ENCODE measurements at regions of chr18 and their contacts with region 1.

Region 1: DNA sequence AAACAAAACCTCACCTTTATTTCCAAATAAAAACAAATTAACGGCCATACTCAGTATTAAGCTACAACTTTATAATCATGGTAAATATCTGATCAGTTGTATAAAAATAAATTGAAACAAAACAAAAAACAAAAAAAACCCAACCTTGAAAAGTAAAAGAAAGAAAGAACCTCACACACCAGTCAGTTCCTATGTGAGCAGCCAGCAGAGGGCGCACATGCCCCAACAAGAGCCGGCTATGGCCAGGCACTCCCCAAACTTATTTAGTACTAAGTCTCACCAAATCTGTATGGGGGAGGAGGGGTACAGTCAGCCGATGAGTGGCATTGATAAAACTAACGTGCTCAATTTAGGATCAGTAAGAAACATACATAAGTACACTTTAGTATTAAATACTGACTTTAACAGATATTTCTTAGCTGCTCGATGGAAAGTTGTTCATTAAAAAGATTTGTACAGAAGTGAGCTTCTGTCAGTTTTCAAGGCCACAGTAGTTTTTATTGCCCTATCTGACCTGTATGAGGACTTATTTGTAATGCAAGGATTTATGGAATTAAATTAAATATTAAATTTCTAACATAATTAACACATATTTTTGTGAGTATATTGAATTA is 172.6 kb downstream of the TCF4 start:
- DNase-seq: peak; percentile 92
- H3K4me3 Mint-ChIP-seq: no peak overlapping the region
- H3K27ac Mint-ChIP-seq: no peak overlapping the region
- H3K4me1 Mint-ChIP-seq: no peaks in the 10 kb centered on the region
- H3K27me3 Mint-ChIP-seq: peaks cover 2% of the 10 kb centered on the region

Region 2: DNA sequence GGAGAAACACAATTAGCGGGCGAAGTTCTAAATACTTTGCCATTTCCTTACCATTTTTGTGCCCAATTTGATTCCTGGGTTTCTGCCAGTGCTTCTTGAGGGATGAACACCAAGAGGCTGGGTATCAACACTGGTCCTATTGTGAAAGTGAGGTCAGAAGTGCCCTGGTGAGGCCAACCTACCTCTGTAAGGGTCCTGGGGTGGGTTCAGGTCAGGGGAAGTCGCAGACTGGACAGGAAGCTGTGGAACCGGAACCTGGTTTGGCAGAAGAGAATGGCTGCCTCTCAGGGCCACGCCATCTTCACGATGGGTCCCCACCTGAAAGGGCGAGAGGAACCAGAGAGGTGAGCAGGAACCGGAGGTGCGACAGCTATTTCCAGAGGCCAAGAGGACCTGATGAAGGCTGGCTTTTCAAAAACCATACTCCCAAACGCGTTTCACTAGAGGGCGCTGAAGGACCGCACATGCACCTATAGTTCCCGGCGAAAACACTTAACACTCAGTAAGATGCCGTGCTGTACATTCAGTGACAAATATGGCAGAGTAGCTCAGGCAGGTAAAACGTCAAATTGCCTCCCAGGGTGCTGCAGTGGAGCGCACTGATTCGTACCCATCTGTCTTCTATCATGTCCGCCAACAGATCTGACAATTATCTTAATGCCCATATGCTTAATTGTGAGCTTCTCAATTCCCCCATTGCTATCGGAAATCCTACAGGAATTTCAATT is 180.8 kb before region 1 on chr18:
- intact Hi-C with region 1: loop called (anchors 10 kb)
- DNase-seq: peak; percentile 87
- H3K4me3 Mint-ChIP-seq: no peak overlapping the region
- H3K27ac Mint-ChIP-seq: no peak overlapping the region
- H3K4me1 Mint-ChIP-seq: peaks cover 2% of the 10 kb centered on the region
- H3K27me3 Mint-ChIP-seq: no peaks in the 10 kb centered on the region

Region 3: DNA sequence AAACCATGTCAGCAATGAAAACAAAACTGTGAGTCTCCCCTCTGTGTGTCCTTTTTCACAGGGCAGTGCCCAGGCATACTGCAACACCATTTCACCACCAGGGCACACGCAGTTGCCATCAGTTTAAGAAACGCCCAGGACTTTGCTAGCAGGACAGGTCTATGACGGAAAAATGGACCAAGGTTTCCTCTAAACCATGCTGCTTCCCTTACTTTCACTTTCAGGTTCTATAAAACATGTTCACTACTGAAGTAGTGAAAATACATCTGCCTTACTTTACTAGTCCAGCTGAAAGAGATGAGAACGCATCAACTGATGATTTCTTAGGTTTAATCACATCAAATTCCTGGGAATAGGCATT is 62.1 kb after region 1 on chr18:
- intact Hi-C with region 1: no loop called
- DNase-seq: peak; percentile 80
- H3K4me3 Mint-ChIP-seq: peak overlapping the region; percentile 81
- H3K27ac Mint-ChIP-seq: peak overlapping the region; percentile 67
- H3K4me1 Mint-ChIP-seq: peaks cover 9% of the 10 kb centered on the region
- H3K27me3 Mint-ChIP-seq: peaks cover 4% of the 10 kb centered on the region

Region 4: DNA sequence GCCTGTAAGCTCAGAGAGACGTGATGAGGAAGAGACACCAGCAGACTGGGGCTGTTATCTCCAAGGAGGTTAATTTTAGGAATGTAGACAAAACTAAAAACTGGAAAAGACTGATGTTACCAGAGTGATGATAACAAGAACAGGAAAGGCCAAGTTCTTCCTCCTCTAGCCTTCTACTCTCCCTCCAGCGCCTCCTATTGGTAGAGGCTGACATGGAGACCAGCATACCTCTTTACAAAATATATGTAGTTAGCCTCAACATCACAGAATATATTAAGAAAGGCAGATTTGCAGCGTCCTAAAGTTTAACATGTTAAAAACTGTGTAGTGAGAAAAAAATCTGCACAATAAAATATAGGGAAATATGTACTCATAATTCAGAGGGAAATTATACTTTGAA is 106.6 kb after region 1 on chr18:
- intact Hi-C with region 1: loop called (anchors 10 kb)
- DNase-seq: peak; percentile 69
- H3K4me3 Mint-ChIP-seq: no peak overlapping the region
- H3K27ac Mint-ChIP-seq: no peak overlapping the region
- H3K4me1 Mint-ChIP-seq: no peaks in the 10 kb centered on the region
- H3K27me3 Mint-ChIP-seq: no peaks in the 10 kb centered on the region

Region 5: DNA sequence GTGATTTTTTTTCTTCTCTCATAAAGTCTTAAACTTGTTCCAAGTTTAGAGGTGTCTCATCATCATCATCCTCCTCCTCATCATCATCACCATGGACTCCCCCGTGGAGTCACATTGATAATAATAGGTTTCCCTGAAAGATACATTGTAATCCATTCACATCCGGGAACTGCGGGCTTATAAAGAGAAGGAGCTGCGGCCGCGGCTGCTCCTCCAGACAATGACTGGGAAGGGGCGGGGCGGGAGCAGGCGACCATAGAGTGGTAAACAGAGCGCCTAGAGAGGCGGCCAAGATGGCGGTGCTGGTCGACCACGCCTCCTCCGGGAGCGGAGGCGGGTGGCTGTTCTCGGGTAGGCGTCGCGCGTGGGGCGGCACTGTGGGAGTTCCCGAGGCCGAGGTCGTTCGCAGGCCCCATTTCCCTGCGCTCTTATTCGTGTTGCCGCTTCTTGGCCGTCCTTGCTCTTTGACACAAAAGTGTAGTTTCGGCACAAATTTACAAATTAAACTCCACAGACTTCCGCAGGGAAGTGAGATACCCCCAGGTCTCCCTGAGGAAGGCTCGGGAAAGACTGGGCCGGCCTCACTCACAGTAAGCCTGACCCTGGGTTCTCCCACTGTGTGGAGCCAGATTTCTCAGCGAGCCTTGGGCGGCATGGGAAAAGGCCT is 174.4 kb after region 1 on chr18:
- intact Hi-C with region 1: loop called (anchors 5 kb)
- DNase-seq: peak; percentile 96
- H3K4me3 Mint-ChIP-seq: peak overlapping the region; percentile 86
- H3K27ac Mint-ChIP-seq: peak overlapping the region; percentile 83
- H3K4me1 Mint-ChIP-seq: peaks cover 21% of the 10 kb centered on the region
- H3K27me3 Mint-ChIP-seq: peaks cover 30% of the 10 kb centered on the region

Region 6: DNA sequence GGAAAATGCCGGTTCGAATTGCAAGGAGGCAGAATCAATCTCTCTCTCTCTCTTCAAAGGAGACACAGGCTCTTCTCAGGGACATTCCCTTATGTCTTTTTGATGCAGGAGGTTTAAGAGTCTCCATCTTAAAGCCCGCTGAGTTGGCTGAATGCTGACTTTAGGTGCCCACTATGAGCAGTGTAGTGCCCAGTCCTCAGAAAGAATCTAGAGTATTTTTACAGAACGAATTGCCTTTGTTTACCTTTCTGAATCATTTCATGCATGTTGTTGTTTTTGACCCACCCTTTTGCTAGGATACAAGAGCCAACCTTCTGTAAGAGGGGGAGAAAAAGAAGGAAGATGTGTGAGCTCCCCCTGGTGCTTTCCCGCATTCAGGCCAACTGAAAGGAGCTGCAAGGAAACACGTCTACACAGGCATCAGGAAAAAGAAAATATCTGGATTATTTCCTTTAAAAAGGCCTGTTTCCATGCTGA is 366.2 kb after region 1 on chr18:
- intact Hi-C with region 1: loop called (anchors 10 kb)
- DNase-seq: no peak
- H3K4me3 Mint-ChIP-seq: no peak overlapping the region
- H3K27ac Mint-ChIP-seq: no peak overlapping the region
- H3K4me1 Mint-ChIP-seq: peaks cover 6% of the 10 kb centered on the region
- H3K27me3 Mint-ChIP-seq: peaks cover 48% of the 10 kb centered on the region

Region 7: DNA sequence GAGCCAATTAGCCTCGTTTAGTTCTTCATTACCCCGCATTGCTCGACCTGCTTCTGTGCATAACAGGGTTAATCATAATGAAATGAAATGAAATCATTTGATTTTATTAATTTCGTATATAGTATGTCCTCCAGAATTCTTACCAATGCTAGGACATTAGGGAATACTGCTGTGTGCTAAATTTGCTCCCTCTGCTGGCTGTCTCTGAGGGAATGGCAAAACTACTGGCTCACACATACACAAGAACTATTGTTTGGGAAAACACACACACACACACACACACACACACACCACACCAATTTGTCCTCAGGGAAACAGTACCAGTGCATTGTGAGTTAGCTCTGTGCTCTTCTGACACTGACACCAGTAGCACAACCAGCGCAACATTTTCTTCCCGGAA is 445.9 kb after region 1 on chr18:
- intact Hi-C with region 1: no loop called
- DNase-seq: no peak
- H3K4me3 Mint-ChIP-seq: no peak overlapping the region
- H3K27ac Mint-ChIP-seq: no peak overlapping the region
- H3K4me1 Mint-ChIP-seq: no peaks in the 10 kb centered on the region
- H3K27me3 Mint-ChIP-seq: no peaks in the 10 kb centered on the region

Region 8: DNA sequence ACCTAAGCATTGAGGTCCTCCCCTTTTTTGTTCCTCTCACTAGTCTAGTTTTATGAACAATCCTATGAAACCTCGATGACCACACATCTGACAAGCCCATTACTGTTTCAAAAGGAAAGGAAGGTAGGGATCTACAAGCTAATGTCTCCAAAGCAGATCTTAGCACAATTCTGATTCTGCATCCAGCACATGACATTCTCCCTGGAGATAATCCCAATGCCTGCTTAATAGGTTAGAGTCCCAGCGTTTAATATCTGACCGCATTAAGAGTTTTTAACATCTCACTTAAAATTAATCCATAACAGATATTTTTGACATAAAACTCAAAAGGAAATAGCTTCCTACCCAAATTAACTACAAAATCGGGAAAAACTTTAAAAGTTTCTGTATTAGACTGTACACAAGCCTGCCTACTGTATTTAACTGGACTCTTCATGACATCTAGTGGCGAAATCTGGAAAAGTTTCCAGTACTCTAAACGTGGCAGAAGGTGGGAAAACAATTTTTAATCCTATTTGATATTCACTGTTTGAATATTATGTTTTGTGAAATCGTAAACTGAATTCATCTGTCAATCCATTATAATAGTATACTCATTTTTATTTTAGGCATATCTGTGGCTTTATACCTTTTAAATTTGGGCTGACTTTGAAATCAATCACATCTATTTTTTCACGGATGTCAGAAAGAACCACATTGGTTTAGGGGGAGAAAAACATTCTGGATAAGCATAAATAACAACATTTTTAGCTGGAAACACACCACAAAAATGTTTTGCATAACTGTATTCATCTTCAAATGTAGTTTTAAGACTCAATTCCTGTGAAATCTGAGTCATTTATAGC is 1160.7 kb after region 1 on chr18:
- intact Hi-C with region 1: loop called (anchors 1 kb)
- DNase-seq: peak; percentile 65
- H3K4me3 Mint-ChIP-seq: no peak overlapping the region
- H3K27ac Mint-ChIP-seq: no peak overlapping the region
- H3K4me1 Mint-ChIP-seq: no peaks in the 10 kb centered on the region
- H3K27me3 Mint-ChIP-seq: peaks cover 7% of the 10 kb centered on the region